ENCODE measurements at regions of chr14 and their contacts with region 1.

Region 1: DNA sequence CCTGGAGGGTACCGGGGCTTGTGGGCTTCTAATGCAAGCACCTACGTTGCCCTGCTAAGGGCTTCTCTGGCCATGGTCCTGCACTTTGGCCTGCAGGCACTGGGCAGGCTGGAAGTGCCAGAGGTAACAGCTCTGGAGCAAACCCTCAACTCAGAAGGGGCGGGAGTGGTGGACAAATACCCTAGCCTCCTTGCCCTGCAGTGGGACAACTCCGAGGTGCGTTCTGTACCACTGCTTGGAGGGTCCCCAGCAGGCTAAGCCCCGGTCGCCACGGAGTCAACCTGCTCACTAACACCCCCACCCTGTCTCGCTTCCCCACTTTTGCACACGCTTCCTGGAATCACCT is 20.4 kb upstream of the BEGAIN start:
- DNase-seq: no peak
- H3K4me3 ChIP-seq: no peak overlapping the region
- H3K27ac ChIP-seq: no peak overlapping the region
- H3K4me1 ChIP-seq: no peaks in the 10 kb centered on the region
- H3K27me3 ChIP-seq: peaks cover 32% of the 10 kb centered on the region
- CTCF ChIP-seq: no peak

Region 2: GRCh38 chr14:100617410-100618317 is 10.1 kb after region 1 on chr14:
- CTCF ChIA-PET with region 1: no interaction called
- POLR2A ChIA-PET with region 1: interaction called, 11 read pairs
- intact Hi-C with region 1: no loop called
- DNase-seq: no peak
- H3K4me3 ChIP-seq: no peak overlapping the region
- H3K27ac ChIP-seq: no peak overlapping the region
- H3K4me1 ChIP-seq: no peaks in the 10 kb centered on the region
- H3K27me3 ChIP-seq: peaks cover 55% of the 10 kb centered on the region
- CTCF ChIP-seq: no peak